ENCODE measurements at regions of chr12 and their contacts with region 1.

Region 1: DNA sequence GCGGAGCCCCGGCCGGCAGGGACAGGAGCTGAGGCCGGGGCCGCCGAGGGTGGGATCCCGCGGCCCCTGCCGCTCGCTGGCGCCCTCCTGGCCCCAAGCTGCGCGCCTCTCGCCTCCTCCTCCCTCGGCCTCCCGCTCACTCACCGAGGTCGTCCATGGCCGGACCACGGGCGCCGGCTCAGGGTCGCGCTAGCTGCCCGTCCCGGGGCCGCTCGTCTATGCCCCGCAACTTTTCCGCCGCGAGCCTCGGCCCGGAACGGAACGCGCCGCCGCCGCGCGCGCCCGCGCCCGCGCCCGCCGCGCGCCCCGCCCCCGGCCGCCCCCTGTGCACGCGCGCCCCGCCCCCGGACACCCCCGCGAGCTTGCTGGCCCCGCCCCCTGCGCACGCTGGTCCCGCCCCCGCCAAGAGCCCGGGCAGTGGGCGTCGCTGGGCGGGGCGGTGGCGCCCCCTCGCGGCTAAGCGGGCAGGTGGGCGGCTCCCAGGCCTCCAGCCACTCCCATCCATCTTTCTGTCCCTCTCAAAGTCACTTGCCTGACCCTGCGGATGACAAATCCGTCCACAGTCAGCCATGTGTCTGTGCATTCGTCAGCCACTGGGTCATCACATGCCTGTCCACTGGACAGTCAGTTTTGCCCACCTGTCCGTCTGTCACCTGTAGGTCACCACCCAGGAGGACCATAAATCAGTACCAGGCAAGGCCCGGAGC is at the start of gene PXN:
- DNase-seq: peak; percentile 85
- ATAC-seq: peak; percentile 96
- H3K4me3 ChIP-seq: peak within 1 kb of the TSS; percentile 40 to 66 (median 60)
- H3K4me3 Mint-ChIP-seq: peak within 1 kb of the TSS; percentile 94
- H3K27ac ChIP-seq: no peak within 1 kb of the TSS
- H3K27ac Mint-ChIP-seq: peak within 1 kb of the TSS; percentile 70
- H3K4me1 ChIP-seq: peaks cover 28 to 35% of the 10 kb centered on the region in 2 donors
- H3K4me1 Mint-ChIP-seq: peaks cover 24% of the 10 kb centered on the region
- H3K27me3 ChIP-seq: peaks cover 0 to 74% (median 34%) of the 10 kb centered on the region in 4 experiments
- H3K27me3 Mint-ChIP-seq: peaks cover 40% of the 10 kb centered on the region
- CTCF ChIP-seq: peak; percentile 75
- total RNA-seq, gene PXN: 2.0 and 2.8 TPM in 2 replicates

Region 2: DNA sequence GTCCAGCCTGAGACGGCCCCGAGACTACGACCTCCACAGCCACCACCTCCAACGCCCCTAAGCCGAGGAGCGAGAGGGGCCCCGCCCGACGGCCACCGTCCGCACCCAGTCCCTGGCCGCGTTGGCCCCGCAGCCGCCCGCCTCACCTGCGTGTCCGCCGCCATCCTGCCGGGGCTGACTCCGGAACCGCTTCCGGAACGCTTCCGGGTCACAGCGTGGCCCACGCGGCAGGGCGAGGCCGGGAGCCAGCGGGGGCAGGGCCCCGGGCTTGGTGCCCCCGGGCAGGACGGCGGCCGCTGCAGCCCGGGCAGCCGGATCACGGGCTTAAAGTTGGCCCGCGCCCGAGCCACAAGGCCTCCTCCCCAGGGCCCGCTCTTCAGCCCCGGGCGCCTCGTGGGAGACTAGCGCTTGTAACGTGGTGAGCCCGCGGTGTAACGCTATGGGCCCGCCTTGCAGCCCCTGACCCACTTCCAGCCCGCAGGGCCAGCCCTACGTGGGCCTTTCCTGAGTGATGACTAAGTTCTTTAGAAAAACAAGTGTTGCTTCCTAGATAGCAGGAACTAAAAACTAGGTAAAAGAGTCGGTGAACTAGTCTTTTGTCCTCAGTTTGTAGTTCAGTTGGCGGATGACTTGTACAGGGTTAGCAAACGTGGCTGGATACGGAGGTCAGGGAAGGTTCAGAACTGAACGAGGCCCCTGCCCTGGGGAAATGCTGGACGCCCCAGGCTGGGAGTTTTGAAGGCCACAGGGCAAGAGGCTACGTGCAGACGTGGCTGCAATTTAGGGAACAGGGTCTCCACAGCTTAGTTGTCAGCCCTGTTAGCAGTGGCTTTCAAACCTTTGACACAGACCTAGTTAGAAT is 70.9 kb before region 1 on chr12 and contains the start of gene GCN1:
- CTCF ChIA-PET with region 1: interaction called, 22 read pairs
- POLR2A ChIA-PET with region 1: no interaction called
- intact Hi-C with region 1: no loop called
- DNase-seq: peak; percentile 89
- ATAC-seq: peak; percentile 96
- H3K4me3 ChIP-seq: peak within 1 kb of the TSS; percentile 74 to 89 (median 78)
- H3K4me3 Mint-ChIP-seq: peak within 1 kb of the TSS; percentile 90
- H3K27ac ChIP-seq: peak within 1 kb of the TSS; percentile 48 to 85
- H3K27ac Mint-ChIP-seq: peak within 1 kb of the TSS; percentile 89
- H3K4me1 ChIP-seq: peaks cover 24 to 35% of the 10 kb centered on the region in 2 donors
- H3K4me1 Mint-ChIP-seq: peaks cover 28% of the 10 kb centered on the region
- H3K27me3 ChIP-seq: no peaks in the 10 kb centered on the region
- H3K27me3 Mint-ChIP-seq: no peaks in the 10 kb centered on the region
- CTCF ChIP-seq: no peak
- total RNA-seq, gene GCN1: 127 and 160 TPM in 2 replicates

Region 3: GRCh38 chr12:120249875-120250795 is 15.5 kb before region 1 on chr12:
- CTCF ChIA-PET with region 1: interaction called, 15 read pairs
- POLR2A ChIA-PET with region 1: interaction called, 4 read pairs
- intact Hi-C with region 1: loop called (anchors 2 kb)
- DNase-seq: peak; percentile 66
- ATAC-seq: peak; percentile 42
- H3K4me3 ChIP-seq: no peak overlapping the region
- H3K4me3 Mint-ChIP-seq: peak overlapping the region; percentile 56
- H3K27ac ChIP-seq: no peak overlapping the region
- H3K27ac Mint-ChIP-seq: peak overlapping the region; percentile 5
- H3K4me1 ChIP-seq: peaks cover 59 to 60% of the 10 kb centered on the region in 2 donors
- H3K4me1 Mint-ChIP-seq: peaks cover 51% of the 10 kb centered on the region
- H3K27me3 ChIP-seq: peaks cover 0 to 65% (median 40%) of the 10 kb centered on the region in 4 experiments
- H3K27me3 Mint-ChIP-seq: peaks cover 48% of the 10 kb centered on the region
- CTCF ChIP-seq: no peak

Measured in B cell (primary cell).